Breast epithelium (tissue), 4 donors: ENCODE measurements at regions of chr4 and their contacts with region 1.

Region 1: DNA sequence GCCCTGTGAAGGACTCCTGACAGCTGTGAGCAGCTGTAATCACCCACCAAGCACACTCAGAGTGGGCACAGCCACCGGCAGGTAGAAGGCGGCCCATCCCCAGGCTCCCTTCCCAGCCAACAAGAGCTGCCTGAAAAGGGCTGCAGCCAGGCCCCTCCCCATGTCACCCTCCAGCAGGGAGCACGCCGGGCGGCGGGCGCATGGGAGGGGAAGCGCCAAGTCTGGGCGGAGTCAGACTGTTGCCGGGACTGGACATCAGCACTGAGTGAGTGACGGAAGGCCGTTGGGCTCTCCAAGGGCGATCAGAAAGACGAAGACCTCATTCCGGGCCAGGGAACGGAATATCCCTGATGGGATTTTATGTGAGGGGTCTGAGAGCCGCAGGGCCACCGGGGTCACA is 82.1 kb downstream of the PPP2R2C start:
- DNase-seq: no peak
- H3K4me3 ChIP-seq: no peak overlapping the region
- H3K27ac ChIP-seq: no peak overlapping the region
- H3K4me1 ChIP-seq: no peaks in the 10 kb centered on the region
- H3K27me3 ChIP-seq: no peaks in the 10 kb centered on the region
- CTCF ChIP-seq: no peak
- POLR2A ChIP-seq: no peak

Region 2: DNA sequence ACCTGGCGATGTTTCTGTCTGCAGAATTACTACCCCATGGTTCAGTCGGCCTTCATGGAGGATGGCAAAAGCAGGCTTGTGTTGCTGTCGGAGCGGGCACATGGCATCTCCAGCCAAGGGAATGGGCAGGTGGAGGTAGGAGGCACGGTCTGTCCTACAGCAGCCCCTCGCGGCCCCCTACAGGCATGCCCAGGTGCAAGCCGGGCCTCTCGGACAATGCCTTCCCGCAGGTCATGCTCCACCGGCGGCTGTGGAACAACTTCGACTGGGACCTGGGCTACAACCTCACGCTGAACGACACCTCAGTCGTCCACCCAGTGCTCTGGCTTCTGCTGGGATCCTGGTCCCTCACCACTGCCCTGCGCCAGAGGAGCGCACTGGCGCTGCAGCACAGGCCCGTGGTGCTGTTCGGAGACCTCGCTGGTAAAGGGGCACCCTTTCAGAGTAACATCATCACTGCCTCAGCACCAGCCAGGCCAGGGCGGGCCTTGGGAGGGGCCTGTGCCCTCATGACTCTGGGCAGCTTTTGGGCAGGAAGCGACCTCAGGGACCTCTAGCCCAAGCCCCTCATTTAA is 220.6 kb after region 1 on chr4:
- intact Hi-C with region 1: loop called (anchors 5 kb)
- DNase-seq: no peak
- H3K4me3 ChIP-seq: no peak overlapping the region
- H3K27ac ChIP-seq: no peak overlapping the region
- H3K4me1 ChIP-seq: no peaks in the 10 kb centered on the region
- H3K27me3 ChIP-seq: no peaks in the 10 kb centered on the region
- CTCF ChIP-seq: no peak
- POLR2A ChIP-seq: no peak